HepG2 (cell line): ENCODE measurements at regions of chr5 and their contacts with region 1.

Region 1: GRCh38 chr5:36397901-36398536 is 96.3 kb upstream of the RANBP3L start:
- DNase-seq: peak; percentile 20
- ATAC-seq: peak; percentile 52; the same call in 2 of the 3 replicates
- H3K4me3 ChIP-seq: no peak overlapping the region
- H3K27ac ChIP-seq: no peak overlapping the region
- H3K4me1 ChIP-seq: peaks cover 38% of the 10 kb centered on the region
- H3K27me3 ChIP-seq: no peaks in the 10 kb centered on the region
- CTCF ChIP-seq: peak; percentile 67
- EP300 ChIP-seq: no peak
- POLR2A ChIP-seq: no peak
- RAD21 ChIP-seq: 0 out of 2 replicates have a peak, but pooled peaks have one; percentile 29

Region 2: GRCh38 chr5:36059571-36060419 is 338.2 kb before region 1 on chr5:
- CTCF ChIA-PET with region 1: no interaction called
- POLR2A ChIA-PET with region 1: no interaction called
- in situ Hi-C with region 1: no loop called
- intact Hi-C with region 1: no loop called
- DNase-seq: no peak
- ATAC-seq: no peak
- H3K4me3 ChIP-seq: no peak overlapping the region
- H3K27ac ChIP-seq: no peak overlapping the region
- H3K4me1 ChIP-seq: no peaks in the 10 kb centered on the region
- H3K27me3 ChIP-seq: peaks cover 0 to under 1% of the 10 kb centered on the region in 2 experiments; a peak in 1 of 5 replicates
- CTCF ChIP-seq: no peak
- EP300 ChIP-seq: no peak
- POLR2A ChIP-seq: no peak
- RAD21 ChIP-seq: no peak

Region 3: GRCh38 chr5:36079200-36079761 is 318.7 kb before region 1 on chr5:
- CTCF ChIA-PET with region 1: no interaction called
- POLR2A ChIA-PET with region 1: no interaction called
- in situ Hi-C with region 1: no loop called
- intact Hi-C with region 1: loop called (anchors 1 kb)
- DNase-seq: peak; percentile 55
- ATAC-seq: peak; percentile 99
- H3K4me3 ChIP-seq: peak overlapping the region in 1 of 3 experiments; percentile 38; a peak in 1 of 6 replicates
- H3K27ac ChIP-seq: no peak overlapping the region
- H3K4me1 ChIP-seq: no peaks in the 10 kb centered on the region
- H3K27me3 ChIP-seq: no peaks in the 10 kb centered on the region
- CTCF ChIP-seq: peak; percentile 85
- EP300 ChIP-seq: no peak
- POLR2A ChIP-seq: no peak
- RAD21 ChIP-seq: peak; percentile 31; the same call in 1 of the 2 replicates

Region 4: DNA sequence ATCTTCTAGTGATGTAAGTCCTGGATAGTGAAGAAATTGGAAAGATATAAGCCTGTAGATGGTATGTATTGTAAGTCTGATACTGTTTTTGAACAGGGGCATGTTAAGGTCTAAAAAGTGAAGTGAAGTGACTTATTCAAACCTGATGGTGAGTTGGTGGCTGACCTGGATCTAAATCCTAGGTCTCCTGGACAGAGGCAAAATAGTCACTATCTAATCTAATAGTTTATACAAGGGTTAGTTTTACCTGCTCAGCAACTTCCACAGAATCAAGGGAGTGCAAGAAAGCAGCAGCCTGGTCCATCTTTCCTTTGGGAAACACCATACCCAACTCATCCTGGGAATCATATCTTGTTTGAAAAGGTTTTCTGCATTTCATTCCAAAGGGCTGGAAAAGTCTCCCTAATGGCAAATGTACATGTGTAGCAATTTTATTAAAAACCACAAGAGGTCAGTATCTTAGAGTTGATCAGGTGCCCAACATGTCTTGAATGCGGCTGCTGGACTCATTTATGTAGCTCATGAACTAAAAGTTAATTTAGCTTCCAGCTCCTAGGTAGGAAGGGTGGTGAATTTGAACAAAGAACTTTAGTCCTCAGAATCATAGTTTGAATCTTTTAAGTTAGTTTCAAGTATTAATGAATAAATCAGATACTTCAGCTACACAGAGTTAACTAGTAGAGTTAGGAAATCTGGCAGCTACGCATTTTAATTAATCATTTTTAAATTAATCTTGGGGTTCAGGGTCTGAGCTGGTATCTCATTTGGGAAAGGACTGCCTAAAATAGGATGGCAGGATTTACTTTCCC is 220.1 kb before region 1 on chr5:
- CTCF ChIA-PET with region 1: no interaction called
- POLR2A ChIA-PET with region 1: no interaction called
- in situ Hi-C with region 1: no loop called
- intact Hi-C with region 1: loop called (anchors 2 kb)
- DNase-seq: peak; percentile 48
- ATAC-seq: peak; percentile 45; the same call in 2 of the 3 replicates
- H3K4me3 ChIP-seq: no peak overlapping the region
- H3K27ac ChIP-seq: peak overlapping the region; percentile 23
- H3K4me1 ChIP-seq: peaks cover 60% of the 10 kb centered on the region
- H3K27me3 ChIP-seq: no peaks in the 10 kb centered on the region
- CTCF ChIP-seq: peak; percentile 71
- EP300 ChIP-seq: no peak
- POLR2A ChIP-seq: no peak
- RAD21 ChIP-seq: 0 out of 2 replicates have a peak, but pooled peaks have one; percentile 35

Region 5: GRCh38 chr5:36264202-36264760 is 133.7 kb before region 1 on chr5:
- CTCF ChIA-PET with region 1: interaction called, 6 read pairs
- POLR2A ChIA-PET with region 1: no interaction called
- in situ Hi-C with region 1: loop called (anchors 10 kb)
- intact Hi-C with region 1: loop called (anchors 1 kb)
- DNase-seq: no peak
- ATAC-seq: peak; percentile 56; the same call in 2 of the 3 replicates
- H3K4me3 ChIP-seq: no peak overlapping the region; a peak in 1 of 6 replicates
- H3K27ac ChIP-seq: no peak overlapping the region
- H3K4me1 ChIP-seq: peaks cover 9% of the 10 kb centered on the region
- H3K27me3 ChIP-seq: no peaks in the 10 kb centered on the region
- CTCF ChIP-seq: no peak
- EP300 ChIP-seq: no peak
- POLR2A ChIP-seq: no peak
- RAD21 ChIP-seq: no peak

Region 6: DNA sequence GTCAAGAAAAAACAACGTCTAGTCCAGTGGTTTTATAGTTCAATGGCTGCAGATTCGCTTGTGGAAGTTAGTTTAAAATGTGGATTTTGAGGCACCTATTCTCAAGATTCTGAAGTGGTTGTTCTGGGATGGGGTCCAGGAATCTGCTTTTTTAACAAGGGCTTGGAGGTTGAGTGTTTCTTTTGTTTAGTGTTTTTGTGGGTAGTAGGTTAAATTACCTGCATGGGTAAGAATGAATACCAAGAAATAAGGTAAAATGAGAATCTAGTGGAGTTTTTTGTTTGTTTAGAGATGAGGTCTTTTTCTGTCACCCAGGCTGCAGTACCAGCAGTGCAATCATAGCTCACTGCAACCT is 127.8 kb before region 1 on chr5:
- CTCF ChIA-PET with region 1: interaction called, 6 read pairs
- POLR2A ChIA-PET with region 1: no interaction called
- in situ Hi-C with region 1: loop called (anchors 10 kb)
- intact Hi-C with region 1: loop called (anchors 1 kb)
- DNase-seq: no peak
- ATAC-seq: no peak
- H3K4me3 ChIP-seq: no peak overlapping the region
- H3K27ac ChIP-seq: no peak overlapping the region
- H3K4me1 ChIP-seq: no peaks in the 10 kb centered on the region
- H3K27me3 ChIP-seq: no peaks in the 10 kb centered on the region; a peak in 1 of 5 replicates
- CTCF ChIP-seq: no peak
- EP300 ChIP-seq: no peak
- POLR2A ChIP-seq: no peak
- RAD21 ChIP-seq: no peak

Region 7: DNA sequence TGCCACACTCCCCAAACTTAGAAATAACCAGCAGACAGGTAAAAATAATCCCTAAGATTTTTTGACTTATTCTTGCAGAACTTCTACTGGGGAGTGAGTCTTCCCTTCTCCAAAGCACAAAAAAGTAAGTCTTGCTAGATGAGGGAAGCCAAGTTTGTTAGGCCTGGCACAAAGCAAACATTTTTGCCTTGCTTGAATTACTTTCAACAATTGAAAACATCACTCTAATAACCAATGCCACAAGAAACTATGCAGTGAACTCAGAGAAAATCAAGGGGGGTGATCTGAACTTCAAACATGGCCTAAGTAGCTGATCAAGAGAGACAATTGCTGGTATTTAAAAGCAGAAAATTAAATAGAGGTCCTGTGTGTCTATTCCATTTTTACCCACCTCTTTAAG is 84.8 kb after region 1 on chr5:
- CTCF ChIA-PET with region 1: no interaction called
- POLR2A ChIA-PET with region 1: no interaction called
- in situ Hi-C with region 1: no loop called
- intact Hi-C with region 1: no loop called
- DNase-seq: no peak
- ATAC-seq: no peak
- H3K4me3 ChIP-seq: no peak overlapping the region
- H3K27ac ChIP-seq: no peak overlapping the region
- H3K4me1 ChIP-seq: no peaks in the 10 kb centered on the region
- H3K27me3 ChIP-seq: no peaks in the 10 kb centered on the region
- CTCF ChIP-seq: no peak
- EP300 ChIP-seq: no peak
- POLR2A ChIP-seq: no peak
- RAD21 ChIP-seq: no peak